GM23248 (cell line): ENCODE measurements at regions of chr2 and their contacts with region 1.

Region 1: GRCh38 chr2:199979832-199980628 is 24.6 kb downstream of the MAIP1 start:
- DNase-seq: peak; percentile 90
- H3K4me3 ChIP-seq: peak overlapping the region; percentile 58
- H3K27ac ChIP-seq: peak overlapping the region; percentile 48
- H3K4me1 ChIP-seq: peaks cover 41% of the 10 kb centered on the region
- H3K27me3 ChIP-seq: no peaks in the 10 kb centered on the region

Region 2: GRCh38 chr2:199589308-199589707 is 390.7 kb before region 1 on chr2:
- in situ Hi-C with region 1: no loop called
- DNase-seq: peak; percentile 32
- H3K4me3 ChIP-seq: no peak overlapping the region
- H3K27ac ChIP-seq: no peak overlapping the region
- H3K4me1 ChIP-seq: no peaks in the 10 kb centered on the region
- H3K27me3 ChIP-seq: peaks cover 24% of the 10 kb centered on the region

Region 3: DNA sequence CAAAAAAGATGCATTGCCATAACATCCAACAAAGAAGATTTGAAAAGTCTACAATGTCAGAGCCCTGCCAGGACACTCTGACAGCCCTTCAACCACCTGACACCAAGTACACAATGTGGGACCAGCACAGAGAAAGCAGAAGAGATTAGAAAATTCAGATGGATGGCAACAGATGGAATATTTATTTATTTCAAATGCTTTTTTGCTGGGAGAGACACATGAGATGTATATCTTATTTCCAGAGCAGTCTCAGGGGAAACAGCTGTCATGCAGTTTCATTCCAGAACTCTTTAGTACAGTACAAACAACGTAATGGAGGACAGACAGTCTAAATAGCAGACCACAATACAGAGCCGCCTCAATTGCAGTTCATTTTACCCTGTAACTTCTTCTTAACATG is 85.4 kb after region 1 on chr2:
- in situ Hi-C with region 1: no loop called
- DNase-seq: no peak
- H3K4me3 ChIP-seq: no peak overlapping the region
- H3K27ac ChIP-seq: no peak overlapping the region
- H3K4me1 ChIP-seq: no peaks in the 10 kb centered on the region
- H3K27me3 ChIP-seq: no peaks in the 10 kb centered on the region; the same call in 1 of the 2 replicates

Region 4: DNA sequence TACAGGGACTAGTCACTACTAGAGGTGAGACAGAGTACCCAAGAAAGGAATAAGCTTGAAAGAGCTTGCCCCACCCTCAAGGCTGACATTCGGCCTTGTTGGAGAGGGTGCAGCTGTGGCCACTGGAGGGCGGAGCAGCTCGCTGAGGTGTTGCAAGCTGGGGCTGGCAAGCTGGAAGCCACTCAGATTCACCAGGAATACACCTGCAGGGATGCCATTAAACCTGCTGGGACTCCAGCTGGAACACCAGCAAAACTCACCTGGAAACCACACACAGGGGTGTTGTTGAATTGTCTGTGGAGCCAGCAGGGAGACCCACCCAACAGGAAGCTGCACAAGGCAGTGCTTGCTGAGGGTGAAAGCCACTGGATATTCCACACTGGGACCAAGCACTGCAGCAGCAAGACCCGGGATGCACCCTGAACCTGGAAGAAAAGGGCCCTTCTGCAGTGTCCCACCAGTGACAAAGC is 503.7 kb after region 1 on chr2:
- in situ Hi-C with region 1: loop called (anchors 10 kb)
- DNase-seq: peak; percentile 26
- H3K4me3 ChIP-seq: no peak overlapping the region
- H3K27ac ChIP-seq: no peak overlapping the region
- H3K4me1 ChIP-seq: peaks cover 24% of the 10 kb centered on the region
- H3K27me3 ChIP-seq: no peaks in the 10 kb centered on the region

Region 5: GRCh38 chr2:200703127-200703925 is 723.3 kb after region 1 on chr2:
- in situ Hi-C with region 1: loop called (anchors 10 kb)
- DNase-seq: peak; percentile 83
- H3K4me3 ChIP-seq: no peak overlapping the region
- H3K27ac ChIP-seq: no peak overlapping the region
- H3K4me1 ChIP-seq: no peaks in the 10 kb centered on the region
- H3K27me3 ChIP-seq: no peaks in the 10 kb centered on the region

Region 6: DNA sequence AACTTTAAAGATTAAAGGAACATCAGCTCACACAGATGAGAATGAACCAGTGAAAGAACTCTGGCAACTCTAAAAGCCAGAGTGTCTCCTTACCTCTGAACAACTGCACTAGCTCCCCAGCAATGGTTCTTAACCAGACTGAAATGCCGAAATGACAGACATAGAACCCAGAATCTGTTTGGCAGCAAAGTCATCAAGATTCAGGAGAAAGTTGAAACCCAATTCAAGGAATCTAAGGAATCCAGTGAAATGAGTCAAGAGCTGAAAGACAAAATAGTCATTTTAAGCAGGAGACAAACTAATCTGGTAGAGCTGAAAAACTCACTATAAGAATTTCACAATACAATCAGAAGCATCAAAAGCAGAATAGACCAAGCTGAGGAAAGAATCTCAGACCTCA is 1543.5 kb after region 1 on chr2:
- in situ Hi-C with region 1: no loop called
- DNase-seq: peak; percentile 31
- H3K4me3 ChIP-seq: no peak overlapping the region
- H3K27ac ChIP-seq: no peak overlapping the region
- H3K4me1 ChIP-seq: peaks cover 11% of the 10 kb centered on the region; the same call in 1 of the 2 replicates
- H3K27me3 ChIP-seq: no peaks in the 10 kb centered on the region